Activated naive CD4-positive, alpha-beta T cell treated with anti-CD3 and anti-CD28 coated beads for 36 hours (primary cell): ENCODE measurements at regions of chr2 and their contacts with region 1.

Region 1: DNA sequence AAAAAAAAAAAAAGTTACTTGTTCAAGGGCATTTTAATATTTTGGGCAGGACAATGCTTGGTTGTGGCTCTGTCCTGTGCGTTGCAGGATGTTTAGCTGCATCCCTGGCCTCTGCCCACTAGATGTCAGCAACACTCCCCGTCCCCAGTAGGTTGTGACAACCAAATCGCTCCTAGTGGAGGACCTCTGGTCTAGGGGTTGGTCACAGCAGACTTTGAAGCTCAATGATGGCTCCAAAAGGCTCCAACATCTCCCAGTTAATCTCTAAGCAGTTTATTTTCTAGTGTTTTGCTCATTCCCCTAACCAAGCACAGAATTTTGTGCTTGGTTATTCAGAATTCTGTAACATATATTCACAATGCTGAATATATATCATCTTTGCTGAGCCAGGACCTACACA is 67.0 kb downstream of the CHRNA1 start:
- DNase-seq: peak; percentile 80
- H3K4me3 Mint-ChIP-seq: no peak overlapping the region
- H3K27ac Mint-ChIP-seq: no peak overlapping the region
- H3K4me1 Mint-ChIP-seq: no peaks in the 10 kb centered on the region
- H3K27me3 Mint-ChIP-seq: no peaks in the 10 kb centered on the region

Region 2: GRCh38 chr2:174344716-174345461 is 352.4 kb before region 1 on chr2:
- CTCF ChIA-PET with region 1: no interaction called
- intact Hi-C with region 1: no loop called
- DNase-seq: no peak
- H3K4me3 Mint-ChIP-seq: no peak overlapping the region
- H3K27ac Mint-ChIP-seq: no peak overlapping the region
- H3K4me1 Mint-ChIP-seq: peaks cover 30% of the 10 kb centered on the region
- H3K27me3 Mint-ChIP-seq: peaks cover 45% of the 10 kb centered on the region

Region 3: GRCh38 chr2:174428214-174428613 is 269.0 kb before region 1 on chr2:
- CTCF ChIA-PET with region 1: no interaction called
- intact Hi-C with region 1: no loop called
- DNase-seq: no peak
- H3K4me3 Mint-ChIP-seq: no peak overlapping the region
- H3K27ac Mint-ChIP-seq: no peak overlapping the region
- H3K4me1 Mint-ChIP-seq: no peaks in the 10 kb centered on the region
- H3K27me3 Mint-ChIP-seq: no peaks in the 10 kb centered on the region

Region 4: DNA sequence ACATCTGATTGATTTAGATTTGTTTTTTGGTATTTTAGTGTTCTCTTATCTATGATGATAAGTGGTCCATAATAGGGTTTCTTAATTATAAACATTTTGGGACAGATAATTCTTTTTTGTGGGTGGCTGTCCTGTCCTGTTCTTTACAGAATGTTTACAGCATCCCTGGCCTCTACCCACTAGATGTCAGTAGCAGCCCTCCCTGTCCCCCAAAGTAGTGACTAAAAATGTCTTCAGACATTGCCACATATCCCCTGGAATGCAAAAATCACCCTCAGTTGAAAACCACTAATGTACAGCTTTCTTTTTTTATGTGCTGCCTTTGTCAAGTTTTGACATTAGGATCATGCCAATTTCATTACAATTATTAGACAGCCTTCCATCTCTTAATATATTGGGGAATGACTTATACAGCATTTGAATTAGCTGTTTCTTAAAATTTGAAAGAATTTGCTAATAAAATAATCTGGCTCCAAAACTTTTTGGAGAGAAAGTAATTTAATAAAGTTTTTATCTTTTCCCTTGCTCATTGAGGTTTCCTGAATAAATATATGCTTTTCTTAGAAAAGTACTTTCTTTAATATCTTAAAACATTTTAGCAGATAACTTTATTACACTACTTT is 119.2 kb before region 1 on chr2:
- CTCF ChIA-PET with region 1: interaction called, 11 read pairs
- intact Hi-C with region 1: no loop called
- DNase-seq: peak; percentile 77
- H3K4me3 Mint-ChIP-seq: no peak overlapping the region
- H3K27ac Mint-ChIP-seq: peak overlapping the region; percentile 30
- H3K4me1 Mint-ChIP-seq: peaks cover 69% of the 10 kb centered on the region
- H3K27me3 Mint-ChIP-seq: no peaks in the 10 kb centered on the region

Region 5: GRCh38 chr2:174717273-174717672 is 20.0 kb after region 1 on chr2:
- CTCF ChIA-PET with region 1: interaction called, 9 read pairs
- intact Hi-C with region 1: loop called (anchors 1 kb)
- DNase-seq: peak; percentile 38
- H3K4me3 Mint-ChIP-seq: no peak overlapping the region
- H3K27ac Mint-ChIP-seq: peak overlapping the region; percentile 25
- H3K4me1 Mint-ChIP-seq: peaks cover 27% of the 10 kb centered on the region
- H3K27me3 Mint-ChIP-seq: no peaks in the 10 kb centered on the region

Region 6: GRCh38 chr2:174771631-174772471 is 74.6 kb after region 1 on chr2:
- CTCF ChIA-PET with region 1: interaction called, 13 read pairs
- intact Hi-C with region 1: loop called (anchors 2 kb)
- DNase-seq: peak; percentile 74
- H3K4me3 Mint-ChIP-seq: no peak overlapping the region
- H3K27ac Mint-ChIP-seq: no peak overlapping the region
- H3K4me1 Mint-ChIP-seq: peaks cover 13% of the 10 kb centered on the region
- H3K27me3 Mint-ChIP-seq: no peaks in the 10 kb centered on the region

Region 7: GRCh38 chr2:175036582-175037018 is 339.3 kb after region 1 on chr2:
- CTCF ChIA-PET with region 1: interaction called, 3 read pairs
- intact Hi-C with region 1: loop called (anchors 1 kb)
- DNase-seq: no peak
- H3K4me3 Mint-ChIP-seq: no peak overlapping the region
- H3K27ac Mint-ChIP-seq: no peak overlapping the region
- H3K4me1 Mint-ChIP-seq: peaks cover 6% of the 10 kb centered on the region
- H3K27me3 Mint-ChIP-seq: no peaks in the 10 kb centered on the region